IMR-90 (cell line): ENCODE measurements at regions of chr1 and their contacts with region 1.

Region 1: DNA sequence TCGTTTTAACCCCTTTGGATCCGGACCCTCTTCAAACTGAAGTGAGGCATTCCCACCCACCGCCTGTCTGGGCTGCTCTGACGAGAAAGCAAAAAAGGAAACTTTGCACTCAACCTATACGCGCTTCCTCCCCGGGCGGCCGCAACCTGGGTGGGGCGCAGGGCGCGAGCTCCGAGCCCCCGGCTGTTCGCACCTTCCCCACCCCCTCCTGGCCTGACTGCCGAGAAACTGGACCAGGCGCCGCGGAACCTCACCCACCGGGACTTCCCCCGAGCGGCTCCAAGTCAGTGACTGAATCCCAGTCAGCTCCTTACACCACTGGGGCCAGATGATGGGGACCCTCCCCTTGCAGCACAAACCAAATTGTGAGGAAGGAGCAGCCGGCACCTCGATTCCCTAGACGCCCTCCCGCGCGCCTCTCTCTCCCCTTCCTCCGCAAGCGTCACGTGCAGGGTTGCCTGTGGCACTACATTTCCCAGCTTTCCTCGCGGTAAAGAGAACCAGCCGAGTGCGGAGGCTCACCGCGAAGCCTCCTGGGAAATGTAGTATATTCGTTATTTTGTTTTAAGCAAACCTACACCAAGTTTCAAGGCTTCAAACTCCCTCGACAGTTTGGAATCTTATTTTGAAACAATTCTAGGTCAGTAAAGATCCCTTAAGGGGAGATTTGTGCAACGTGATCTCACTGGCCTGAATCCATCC is at the start of gene RAB29:
- DNase-seq: peak; percentile 77
- ATAC-seq: peak; percentile 97
- H3K4me3 ChIP-seq: peak within 1 kb of the TSS; percentile 62
- H3K27ac ChIP-seq: peak within 1 kb of the TSS; percentile 16; the same call in 1 of the 2 replicates
- H3K4me1 ChIP-seq: peaks cover 3% of the 10 kb centered on the region
- H3K27me3 ChIP-seq: no peaks in the 10 kb centered on the region; the same call in none of the 2 replicates
- CTCF ChIP-seq: no peak
- POLR2A ChIP-seq: no peak
- RAD21 ChIP-seq: no peak
- total RNA-seq, gene RAB29: 5.8 and 7.3 TPM in 2 replicates

Region 2: GRCh38 chr1:205750138-205751035 is 24.8 kb before region 1 on chr1 and contains the start of gene NUCKS1:
- CTCF ChIA-PET with region 1: interaction called, 3 read pairs
- POLR2A ChIA-PET with region 1: no interaction called
- dilution Hi-C with region 1: no loop called
- in situ Hi-C with region 1: no loop called
- intact Hi-C with region 1: loop called (anchors 2 kb)
- DNase-seq: peak; percentile 100
- ATAC-seq: peak; percentile 78
- H3K4me3 ChIP-seq: peak within 1 kb of the TSS; percentile 67
- H3K27ac ChIP-seq: peak within 1 kb of the TSS; percentile 88
- H3K4me1 ChIP-seq: no peaks in the 10 kb centered on the region
- H3K27me3 ChIP-seq: no peaks in the 10 kb centered on the region
- CTCF ChIP-seq: no peak
- POLR2A ChIP-seq: peak; percentile 83; the same call in 1 of the 2 replicates
- RAD21 ChIP-seq: no peak
- total RNA-seq, gene NUCKS1: 103 and 179 TPM in 2 replicates